ENCODE measurements at regions of chr3 and their contacts with region 1.

Region 1: GRCh38 chr3:142844339-142844977 is 44.4 kb downstream of the PCOLCE2 start:
- DNase-seq: peak; percentile 46
- H3K4me3 Mint-ChIP-seq: no peak overlapping the region
- H3K27ac Mint-ChIP-seq: no peak overlapping the region
- H3K4me1 Mint-ChIP-seq: peaks cover 6% of the 10 kb centered on the region
- H3K27me3 Mint-ChIP-seq: no peaks in the 10 kb centered on the region
- CTCF ChIP-seq: peak; percentile 55

Region 2: GRCh38 chr3:142904639-142905436 is 60.4 kb after region 1 on chr3:
- CTCF ChIA-PET with region 1: no interaction called
- intact Hi-C with region 1: loop called (anchors 1 kb)
- DNase-seq: peak; percentile 65
- H3K4me3 Mint-ChIP-seq: peak overlapping the region; percentile 25
- H3K27ac Mint-ChIP-seq: peak overlapping the region; percentile 0
- H3K4me1 Mint-ChIP-seq: peaks cover 17% of the 10 kb centered on the region
- H3K27me3 Mint-ChIP-seq: peaks cover 19% of the 10 kb centered on the region
- CTCF ChIP-seq: peak; percentile 63

Region 3: DNA sequence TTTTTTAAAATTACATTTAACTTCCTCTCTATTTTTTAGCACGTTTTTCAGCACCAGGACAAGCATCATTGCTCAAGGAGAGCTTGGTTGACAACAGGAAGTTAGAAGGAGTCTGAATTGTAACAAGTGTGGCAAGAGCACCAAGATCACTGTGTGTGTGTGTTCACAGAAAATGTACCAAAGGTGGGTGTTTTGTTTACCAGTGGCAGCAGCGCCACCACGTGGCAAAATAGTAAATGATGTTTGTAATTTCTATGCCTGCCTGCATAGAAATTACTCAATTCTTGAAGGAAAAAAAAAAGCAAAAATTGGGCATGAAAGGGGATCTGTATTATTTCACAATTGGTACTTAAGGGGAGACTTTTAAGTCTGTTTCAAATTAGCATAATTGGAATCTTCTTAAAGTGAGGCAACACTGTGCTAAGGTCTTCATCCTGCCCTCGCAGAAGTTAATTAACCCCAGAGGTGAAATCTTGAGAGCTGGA is 149.5 kb after region 1 on chr3:
- CTCF ChIA-PET with region 1: no interaction called
- intact Hi-C with region 1: loop called (anchors 5 kb)
- DNase-seq: peak; percentile 83
- H3K4me3 Mint-ChIP-seq: no peak overlapping the region
- H3K27ac Mint-ChIP-seq: no peak overlapping the region
- H3K4me1 Mint-ChIP-seq: peaks cover 47% of the 10 kb centered on the region
- H3K27me3 Mint-ChIP-seq: no peaks in the 10 kb centered on the region
- CTCF ChIP-seq: peak; percentile 82